CD4-positive, alpha-beta T cell (primary cell): ENCODE measurements at regions of chr13 and their contacts with region 1.

Region 1: GRCh38 chr13:97018029-97018831 is 24.0 kb upstream of the OXGR1 start:
- DNase-seq: peak in 9 of 14 experiments; percentile 4 to 68 (median 21)
- ATAC-seq: peak; percentile 79
- H3K4me3 ChIP-seq: no peak overlapping the region
- H3K4me3 Mint-ChIP-seq: no peak overlapping the region
- H3K27ac ChIP-seq: no peak overlapping the region
- H3K27ac Mint-ChIP-seq: no peak overlapping the region
- H3K4me1 ChIP-seq: peaks cover 4% of the 10 kb centered on the region
- H3K4me1 Mint-ChIP-seq: peaks cover 6% of the 10 kb centered on the region
- H3K27me3 ChIP-seq: peaks cover 11 to 31% of the 10 kb centered on the region in 2 experiments
- H3K27me3 Mint-ChIP-seq: peaks cover 69% of the 10 kb centered on the region
- CTCF ChIP-seq: peak; percentile 85

Region 2: DNA sequence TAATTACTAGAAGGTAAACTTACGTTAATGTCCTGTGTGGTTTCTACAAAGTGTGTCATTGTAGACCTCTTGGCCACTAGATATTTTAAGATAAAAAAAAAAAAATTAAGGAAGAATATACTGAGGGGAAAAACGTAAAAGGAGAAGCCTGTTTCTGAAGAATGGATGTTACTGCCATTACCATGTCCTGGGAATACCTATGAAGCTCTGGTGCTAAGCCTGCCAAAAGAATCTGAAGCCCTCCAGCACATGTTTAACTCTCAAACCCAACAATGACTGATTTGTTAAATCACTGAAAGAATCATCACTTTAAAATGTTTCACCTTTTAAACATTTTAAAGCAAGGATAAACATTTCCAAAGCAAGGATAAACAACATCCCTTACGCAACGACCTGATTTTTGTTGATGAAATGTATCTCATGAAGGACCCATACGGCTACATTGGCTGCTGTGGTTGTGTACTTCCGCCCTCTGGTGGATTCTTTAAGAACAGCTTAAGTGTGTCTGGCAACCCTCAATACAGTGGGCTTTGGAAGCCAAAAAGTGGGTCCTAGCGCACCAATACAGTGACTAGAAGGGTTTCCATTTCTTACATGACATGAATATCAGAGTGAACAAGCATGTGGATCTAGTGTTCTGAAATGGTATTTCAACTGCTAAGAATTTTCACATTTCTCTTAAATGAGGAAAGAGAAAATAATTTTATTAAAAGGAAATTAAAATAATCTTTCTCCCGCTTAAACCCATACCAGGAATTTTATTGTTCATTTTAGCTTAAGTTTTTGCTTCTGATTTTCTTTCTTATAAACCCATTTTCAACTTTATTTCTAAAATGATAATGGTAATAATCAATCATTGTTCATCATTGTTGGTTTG is 341.2 kb after region 1 on chr13:
- CTCF ChIA-PET with region 1: interaction called, 3 read pairs
- POLR2A ChIA-PET with region 1: no interaction called
- intact Hi-C with region 1: loop called (anchors 2 to 5 kb)
- DNase-seq: peak in 13 of 14 experiments; percentile 13 to 80 (median 26)
- ATAC-seq: peak; percentile 98
- H3K4me3 ChIP-seq: no peak overlapping the region
- H3K4me3 Mint-ChIP-seq: no peak overlapping the region
- H3K27ac ChIP-seq: no peak overlapping the region
- H3K27ac Mint-ChIP-seq: peak overlapping the region; percentile 10
- H3K4me1 ChIP-seq: no peaks in the 10 kb centered on the region
- H3K4me1 Mint-ChIP-seq: peaks cover 5% of the 10 kb centered on the region
- H3K27me3 ChIP-seq: no peaks in the 10 kb centered on the region
- H3K27me3 Mint-ChIP-seq: no peaks in the 10 kb centered on the region
- CTCF ChIP-seq: peak; percentile 83